ENCODE measurements at regions of chr10 and their contacts with region 1.

Region 1: GRCh38 chr10:119686439-119687191 is 35.4 kb downstream of the BAG3 start:
- DNase-seq: peak; percentile 93
- H3K4me3 Mint-ChIP-seq: peak overlapping the region; percentile 71
- H3K27ac Mint-ChIP-seq: peak overlapping the region; percentile 82
- H3K4me1 Mint-ChIP-seq: peaks cover 20% of the 10 kb centered on the region
- H3K27me3 Mint-ChIP-seq: no peaks in the 10 kb centered on the region
- CTCF ChIP-seq: peak; percentile 95

Region 2: DNA sequence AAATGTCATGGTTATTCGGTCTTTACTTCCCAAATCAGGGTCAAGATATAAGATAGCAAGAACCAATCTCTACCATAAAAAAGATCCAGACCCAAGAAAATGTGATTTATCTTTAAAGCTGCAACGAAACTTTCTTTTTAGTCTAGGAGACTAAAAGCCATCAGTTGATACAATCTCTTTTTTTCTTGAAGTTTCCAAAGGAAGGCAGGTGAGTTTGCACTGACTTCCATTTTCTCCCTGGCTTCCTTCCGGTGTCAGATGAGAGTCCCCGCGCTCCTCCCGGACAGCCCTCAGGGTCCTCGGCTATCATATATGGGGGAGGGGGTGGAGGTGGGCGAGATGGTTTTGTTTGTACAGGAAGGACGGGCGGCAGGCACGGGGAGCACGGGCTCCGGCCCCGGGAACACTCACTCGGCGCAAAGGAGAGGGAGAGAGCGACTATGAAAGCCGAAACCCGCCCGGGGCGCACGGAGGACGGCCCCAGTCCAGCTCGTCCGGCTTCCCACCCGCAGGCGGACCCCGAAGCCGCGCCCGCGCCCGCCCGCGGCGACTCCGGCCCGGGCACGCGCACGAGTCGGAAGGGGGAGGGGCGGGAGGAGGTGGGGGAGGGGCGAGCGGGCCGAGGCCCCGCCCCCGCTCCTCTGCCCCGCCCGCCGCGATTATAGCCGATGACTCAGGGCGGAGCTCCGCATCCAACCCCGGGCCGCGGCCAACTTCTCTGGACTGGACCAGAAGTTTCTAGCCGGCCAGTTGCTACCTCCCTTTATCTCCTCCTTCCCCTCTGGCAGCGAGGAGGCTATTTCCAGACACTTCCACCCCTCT is 35.7 kb before region 1 on chr10 and contains the start of gene BAG3:
- CTCF ChIA-PET with region 1: interaction called, 7 read pairs
- POLR2A ChIA-PET with region 1: interaction called, 752 read pairs
- intact Hi-C with region 1: no loop called
- DNase-seq: peak; percentile 96
- H3K4me3 Mint-ChIP-seq: peak within 1 kb of the TSS; percentile 94
- H3K27ac Mint-ChIP-seq: peak within 1 kb of the TSS; percentile 94
- H3K4me1 Mint-ChIP-seq: peaks cover 26% of the 10 kb centered on the region
- H3K27me3 Mint-ChIP-seq: no peaks in the 10 kb centered on the region
- CTCF ChIP-seq: no peak
- total RNA-seq, gene BAG3: 53.7 and 55.2 TPM in 2 replicates

Region 3: DNA sequence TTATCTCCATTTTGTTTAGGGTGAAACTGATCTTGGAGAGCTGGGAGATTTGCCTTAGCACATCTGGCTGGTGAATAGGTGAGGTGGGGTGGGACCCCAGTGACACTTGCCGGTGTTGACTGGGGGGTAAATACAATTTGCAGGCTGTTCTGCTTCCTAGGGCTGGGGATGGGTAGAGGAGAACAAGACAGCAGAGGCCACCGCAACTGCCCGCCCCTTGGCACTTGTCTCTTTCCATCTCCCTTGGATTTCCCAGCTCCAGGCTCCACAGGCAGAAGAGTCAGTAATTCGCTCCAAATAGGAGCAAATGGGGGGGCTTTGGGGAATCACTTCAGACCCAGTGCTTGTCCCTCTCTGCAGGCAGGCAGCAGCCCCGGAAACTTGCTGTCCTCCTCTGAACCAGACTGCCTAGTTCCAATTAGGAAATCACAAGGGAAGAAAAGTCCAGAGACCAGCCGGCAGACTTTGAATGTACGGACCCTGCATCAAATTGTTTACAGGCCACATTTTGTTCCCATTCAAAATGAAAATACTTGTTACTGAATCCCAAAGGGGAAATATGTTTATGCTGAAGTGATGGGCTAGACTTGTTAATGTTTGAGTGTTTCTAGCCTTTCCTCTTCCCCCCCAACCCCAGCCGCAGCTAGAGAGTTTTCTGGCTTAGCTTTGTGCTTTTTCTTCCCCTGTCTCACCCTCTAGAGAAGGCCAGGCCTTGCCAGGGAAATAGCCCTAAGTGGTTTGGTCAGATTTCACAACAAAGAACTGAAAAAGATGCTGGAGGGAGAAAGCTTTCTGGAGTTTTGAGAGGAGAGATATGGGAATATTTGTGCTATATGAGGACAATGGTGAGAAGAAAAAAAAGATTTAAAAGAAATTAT is 29.3 kb after region 1 on chr10:
- CTCF ChIA-PET with region 1: interaction called, 13 read pairs
- POLR2A ChIA-PET with region 1: interaction called, 3 read pairs
- intact Hi-C with region 1: no loop called
- DNase-seq: no peak
- H3K4me3 Mint-ChIP-seq: no peak overlapping the region
- H3K27ac Mint-ChIP-seq: no peak overlapping the region
- H3K4me1 Mint-ChIP-seq: no peaks in the 10 kb centered on the region
- H3K27me3 Mint-ChIP-seq: no peaks in the 10 kb centered on the region
- CTCF ChIP-seq: no peak

Region 4: GRCh38 chr10:119737827-119738226 is 51.2 kb after region 1 on chr10:
- CTCF ChIA-PET with region 1: interaction called, 10 read pairs
- POLR2A ChIA-PET with region 1: interaction called, 68 read pairs
- intact Hi-C with region 1: loop called (anchors 2 kb)
- DNase-seq: peak; percentile 81
- H3K4me3 Mint-ChIP-seq: peak overlapping the region; percentile 68
- H3K27ac Mint-ChIP-seq: peak overlapping the region; percentile 86
- H3K4me1 Mint-ChIP-seq: peaks cover 18% of the 10 kb centered on the region
- H3K27me3 Mint-ChIP-seq: no peaks in the 10 kb centered on the region
- CTCF ChIP-seq: no peak

Region 5: DNA sequence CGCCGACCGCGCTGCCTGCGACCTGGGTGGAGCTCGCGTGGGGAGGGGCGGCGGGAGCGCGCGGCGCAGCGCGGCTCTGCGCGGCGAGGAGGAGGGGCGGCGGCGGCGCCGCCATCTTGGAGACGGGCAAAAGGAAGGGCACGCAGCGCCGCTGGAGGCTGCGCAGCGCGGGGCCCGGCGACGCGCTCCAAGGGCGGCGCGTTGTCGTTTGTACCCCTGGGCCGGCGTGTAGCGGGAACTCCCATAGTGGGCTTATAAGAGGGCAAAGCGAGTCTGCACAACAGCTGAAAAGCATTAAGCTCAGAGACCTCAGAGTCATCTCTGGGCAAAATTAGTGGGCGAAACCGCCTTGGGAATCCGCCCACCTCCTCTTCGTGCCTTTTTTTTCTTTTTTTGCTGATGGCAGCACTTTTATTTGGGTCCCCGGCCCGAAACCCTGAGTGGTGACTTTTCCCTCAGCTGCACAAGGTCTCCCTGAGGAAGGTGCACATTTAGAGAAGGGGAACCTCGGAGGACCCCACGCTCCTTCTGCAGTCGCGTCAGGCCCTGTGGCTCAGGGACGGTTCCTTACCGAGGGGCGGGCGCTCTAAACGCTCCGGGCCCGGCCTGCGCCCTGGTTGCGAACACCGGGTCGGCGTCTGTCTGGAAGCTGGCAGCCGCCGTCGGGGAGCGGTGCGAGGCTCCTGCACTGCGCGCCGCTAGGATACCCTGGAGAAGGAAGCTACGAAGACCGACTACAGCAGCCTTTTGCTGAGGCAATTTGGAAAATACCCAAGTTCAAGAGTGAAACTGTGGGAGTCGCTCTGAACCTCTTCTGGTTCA is 186.5 kb after region 1 on chr10:
- CTCF ChIA-PET with region 1: interaction called, 3 read pairs
- POLR2A ChIA-PET with region 1: interaction called, 31 read pairs
- intact Hi-C with region 1: no loop called
- DNase-seq: peak; percentile 77
- H3K4me3 Mint-ChIP-seq: peak overlapping the region; percentile 87
- H3K27ac Mint-ChIP-seq: peak overlapping the region; percentile 59
- H3K4me1 Mint-ChIP-seq: peaks cover 28% of the 10 kb centered on the region
- H3K27me3 Mint-ChIP-seq: no peaks in the 10 kb centered on the region
- CTCF ChIP-seq: no peak

Region 6: GRCh38 chr10:120336911-120337540 is 650.4 kb after region 1 on chr10:
- CTCF ChIA-PET with region 1: no interaction called
- POLR2A ChIA-PET with region 1: no interaction called
- intact Hi-C with region 1: loop called (anchors 5 kb)
- DNase-seq: peak; percentile 66
- H3K4me3 Mint-ChIP-seq: no peak overlapping the region
- H3K27ac Mint-ChIP-seq: no peak overlapping the region
- H3K4me1 Mint-ChIP-seq: no peaks in the 10 kb centered on the region
- H3K27me3 Mint-ChIP-seq: peaks cover 25% of the 10 kb centered on the region
- CTCF ChIP-seq: peak; percentile 64